ENCODE measurements at regions of chr12 and their contacts with region 1.

Region 1: DNA sequence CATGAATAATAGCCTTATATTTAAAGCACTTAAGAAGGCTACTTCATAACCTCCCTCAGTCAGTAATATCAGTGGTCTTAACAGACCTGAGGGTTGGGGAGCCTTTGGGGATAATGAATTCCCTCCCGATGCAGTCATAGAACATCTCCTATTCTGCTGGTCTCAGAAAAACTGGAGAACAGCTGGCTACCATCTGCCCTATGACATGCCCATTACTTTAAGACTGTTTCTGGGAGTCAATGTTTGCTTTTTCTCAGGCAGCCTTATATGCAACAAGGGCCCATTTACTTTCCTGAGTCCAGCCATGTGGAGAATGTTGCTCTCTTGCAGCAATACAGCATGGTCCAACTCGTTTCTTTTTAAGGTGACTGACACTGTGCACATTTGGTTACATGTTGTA is 161.7 kb upstream of the PARP11 start:
- DNase-seq: no peak
- H3K4me3 ChIP-seq: no peak overlapping the region
- CTCF ChIP-seq: no peak
- POLR2A ChIP-seq: no peak

Region 2: GRCh38 chr12:3704512-3705353 is 330.2 kb before region 1 on chr12:
- intact Hi-C with region 1: no loop called
- DNase-seq: no peak
- H3K4me3 ChIP-seq: no peak overlapping the region
- CTCF ChIP-seq: no peak
- POLR2A ChIP-seq: no peak

Region 3: DNA sequence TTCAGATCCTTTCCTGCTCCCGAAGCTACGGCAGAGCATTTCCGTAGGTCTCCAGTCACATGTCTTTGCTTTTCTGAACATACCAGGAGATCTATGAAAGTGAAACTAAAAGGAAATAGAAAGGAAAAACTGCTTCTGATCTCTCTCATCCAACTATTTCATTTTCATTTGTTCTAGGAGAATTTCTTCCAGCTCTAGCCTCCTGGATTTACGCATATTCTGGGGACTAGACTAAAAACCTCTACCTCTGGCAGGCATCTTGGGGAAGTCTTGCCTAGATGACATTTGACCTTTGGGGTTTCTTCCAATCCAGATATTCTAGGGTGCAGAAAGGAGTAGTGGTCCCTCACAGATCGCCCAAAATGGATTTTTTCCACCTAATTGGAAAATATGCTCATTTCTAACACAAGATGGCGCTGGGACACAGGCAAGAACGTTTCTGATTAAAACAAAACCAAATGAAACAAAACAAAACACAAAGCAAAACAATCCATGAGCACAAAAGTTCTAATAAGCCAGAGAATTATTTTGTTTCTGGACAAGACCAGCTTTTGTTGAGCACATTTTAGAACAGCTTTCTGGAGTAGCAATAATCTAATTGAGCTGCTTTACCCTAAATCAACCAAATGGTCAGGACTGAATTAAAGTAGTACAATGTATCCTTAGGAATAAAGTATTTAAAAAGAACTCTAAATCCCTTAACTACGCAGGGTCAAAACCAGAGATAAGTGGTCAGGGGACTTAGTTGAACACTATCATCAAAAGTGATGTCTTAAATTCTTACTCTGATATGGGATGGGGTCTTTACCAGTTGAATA is 149.4 kb before region 1 on chr12:
- intact Hi-C with region 1: loop called (anchors 2 kb)
- DNase-seq: no peak
- H3K4me3 ChIP-seq: no peak overlapping the region
- CTCF ChIP-seq: no peak
- POLR2A ChIP-seq: no peak

Measured in lower leg skin (tissue), 4 donors.